ENCODE measurements at regions of chr2 and their contacts with region 1.

Region 1: GRCh38 chr2:151828143-151828889 is at the start of gene ARL5A:
- DNase-seq: peak; percentile 93 to 95
- ATAC-seq: peak; percentile 88
- H3K4me3 ChIP-seq: peak within 1 kb of the TSS; percentile 87 to 94 (median 90)
- H3K27ac ChIP-seq: peak within 1 kb of the TSS; percentile 90 to 96 (median 95)
- H3K4me1 ChIP-seq: peaks cover 46 to 49% of the 10 kb centered on the region in 2 donors
- H3K27me3 ChIP-seq: no peaks in the 10 kb centered on the region
- CTCF ChIP-seq: peak in 1 of 5 experiments; percentile 5
- POLR2A ChIP-seq: peak; percentile 92 to 96
- total RNA-seq, gene ARL5A: 45.0 to 81.7 (median 60.6) TPM

Region 2: DNA sequence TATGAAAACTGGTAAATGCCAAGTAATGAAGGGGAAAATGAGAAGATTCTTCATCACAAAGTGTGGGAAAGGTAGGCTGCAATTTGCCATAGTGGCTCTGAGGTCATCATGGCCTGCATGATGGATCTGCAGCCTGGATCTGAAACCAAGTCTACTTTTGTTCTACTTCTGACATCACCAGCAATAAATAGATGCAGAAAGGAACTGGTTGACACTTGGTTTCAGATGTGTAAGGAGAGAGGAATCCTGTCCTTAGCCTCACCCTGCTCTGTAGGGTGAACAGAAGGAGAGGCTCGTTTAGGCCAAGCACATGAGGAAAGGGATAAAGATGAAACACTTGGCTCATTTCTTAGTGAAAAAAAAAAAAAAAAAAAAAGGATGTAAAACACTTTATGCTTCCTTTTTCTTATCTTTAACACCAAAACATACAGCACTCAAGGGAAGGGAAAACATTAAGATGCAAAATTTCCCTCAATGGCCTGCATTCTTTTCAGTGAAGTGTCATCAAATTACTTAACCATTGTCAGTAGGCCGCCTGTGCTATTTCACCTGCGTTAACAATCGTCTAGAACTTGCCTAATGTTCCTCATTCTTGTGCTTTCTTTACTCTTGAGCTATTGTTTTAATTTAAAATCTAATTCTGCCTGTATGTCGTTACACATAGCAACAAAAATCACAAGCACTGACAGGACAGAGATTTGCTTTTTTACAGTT is 97.9 kb before region 1 on chr2:
- in situ Hi-C with region 1: no loop called
- intact Hi-C with region 1: loop called (anchors 5 kb)
- DNase-seq: peak; percentile 51 to 62
- ATAC-seq: peak; percentile 76 to 77
- H3K4me3 ChIP-seq: peak overlapping the region; percentile 3 to 63 (median 40)
- H3K27ac ChIP-seq: peak overlapping the region; percentile 81 to 93 (median 90)
- H3K4me1 ChIP-seq: peaks cover 71 to 75% of the 10 kb centered on the region in 2 donors
- H3K27me3 ChIP-seq: no peaks in the 10 kb centered on the region
- CTCF ChIP-seq: no peak
- POLR2A ChIP-seq: peak; percentile 14 to 73

Region 3: DNA sequence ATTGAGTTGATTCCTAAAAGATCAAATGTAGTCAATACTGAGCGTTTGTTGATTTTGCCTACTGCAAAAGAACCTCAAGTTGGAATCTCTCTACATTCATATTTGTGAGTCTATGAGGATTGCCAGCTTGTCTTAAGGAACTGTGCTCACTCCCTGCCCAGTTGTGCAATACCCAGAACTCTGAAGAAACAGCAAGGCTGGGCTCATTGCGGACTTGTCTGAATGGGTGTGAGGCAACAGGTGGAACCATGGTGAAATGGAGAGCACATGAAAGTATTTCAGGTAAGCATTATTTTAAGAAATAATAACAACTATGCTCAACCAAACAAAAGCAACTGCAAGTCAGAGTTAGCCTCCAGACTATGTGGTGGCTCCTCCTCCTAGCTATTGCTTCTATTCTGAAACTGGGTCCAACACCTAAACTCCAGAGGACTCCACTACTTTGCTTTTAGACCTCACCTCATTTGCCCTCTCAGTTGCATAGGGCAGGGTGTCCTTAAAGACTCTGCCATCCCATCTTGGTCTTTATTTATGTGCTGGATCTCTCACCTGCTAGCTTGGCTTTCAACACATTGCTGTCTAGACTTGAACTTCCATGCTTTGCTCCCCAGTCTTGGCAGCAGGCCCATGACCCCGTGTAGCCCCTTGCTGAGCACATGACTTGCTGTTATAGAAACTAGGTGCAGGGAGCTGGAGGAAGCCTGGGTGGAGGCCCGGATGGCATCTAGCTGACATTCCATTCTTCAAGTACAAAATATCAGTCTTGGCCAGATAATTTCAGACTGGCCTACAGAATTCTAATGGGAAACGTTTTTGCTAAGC is 94.7 kb after region 1 on chr2:
- in situ Hi-C with region 1: no loop called
- intact Hi-C with region 1: loop called (anchors 2 kb)
- DNase-seq: peak; percentile 61 to 86
- ATAC-seq: peak; percentile 92 to 98
- H3K4me3 ChIP-seq: no peak overlapping the region
- H3K27ac ChIP-seq: peak overlapping the region; percentile 58 to 76 (median 70)
- H3K4me1 ChIP-seq: peaks cover 11 to 13% of the 10 kb centered on the region in 2 donors
- H3K27me3 ChIP-seq: no peaks in the 10 kb centered on the region
- CTCF ChIP-seq: no peak
- POLR2A ChIP-seq: no peak

Region 4: DNA sequence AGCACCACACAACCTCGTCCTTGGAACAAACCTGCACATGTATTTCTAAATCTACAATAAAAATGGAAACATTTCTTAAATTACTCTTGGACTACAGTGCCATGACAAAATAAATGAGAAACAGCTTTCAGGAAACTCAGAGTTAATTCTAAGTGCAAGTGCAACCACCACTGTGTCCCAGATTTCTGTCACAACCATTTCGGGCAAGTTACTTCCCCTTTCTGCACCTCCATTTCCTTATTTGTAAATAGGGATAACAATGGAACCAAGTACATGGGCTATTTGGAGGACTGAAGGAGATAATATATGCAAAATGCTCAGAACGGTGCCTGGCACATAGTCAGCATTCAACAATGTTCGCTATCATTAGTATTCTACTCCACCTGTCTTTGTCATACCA is 177.3 kb after region 1 on chr2:
- in situ Hi-C with region 1: loop called in 2 of 4 experiments (anchors 25 kb)
- intact Hi-C with region 1: loop called (anchors 2 kb)
- DNase-seq: no peak
- ATAC-seq: no peak
- H3K4me3 ChIP-seq: no peak overlapping the region
- H3K27ac ChIP-seq: no peak overlapping the region
- H3K4me1 ChIP-seq: peaks cover 12 to 16% of the 10 kb centered on the region in 2 donors
- H3K27me3 ChIP-seq: no peaks in the 10 kb centered on the region
- CTCF ChIP-seq: no peak
- POLR2A ChIP-seq: no peak

Region 5: DNA sequence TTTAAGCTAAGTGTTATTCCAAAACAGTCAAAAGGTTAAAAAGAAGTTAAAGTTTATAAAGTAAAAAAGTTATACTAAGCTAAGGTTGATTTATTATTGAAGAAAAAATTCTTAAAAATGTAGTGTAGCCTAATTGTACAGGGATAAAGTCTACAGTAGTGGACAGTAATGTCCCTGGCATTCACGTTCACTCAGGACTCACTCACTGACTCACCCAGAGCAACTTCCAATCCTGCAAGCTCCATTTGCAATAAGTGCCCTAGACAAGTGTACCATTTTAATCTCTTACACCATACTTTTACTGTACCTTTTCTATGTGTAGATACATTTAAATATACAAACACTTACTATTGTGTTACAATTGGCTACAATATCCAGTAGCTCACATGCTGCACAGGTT is 184.4 kb after region 1 on chr2:
- in situ Hi-C with region 1: loop called in 2 of 4 experiments (anchors 25 kb)
- intact Hi-C with region 1: no loop called
- DNase-seq: no peak
- ATAC-seq: no peak
- H3K4me3 ChIP-seq: no peak overlapping the region
- H3K27ac ChIP-seq: no peak overlapping the region
- H3K4me1 ChIP-seq: no peaks in the 10 kb centered on the region
- H3K27me3 ChIP-seq: no peaks in the 10 kb centered on the region
- CTCF ChIP-seq: no peak
- POLR2A ChIP-seq: no peak

Region 6: GRCh38 chr2:152620208-152620607 is 791.9 kb after region 1 on chr2:
- in situ Hi-C with region 1: no loop called
- intact Hi-C with region 1: loop called (anchors 5 kb)
- DNase-seq: peak; percentile 29 to 35
- ATAC-seq: peak; percentile 81 to 89
- H3K4me3 ChIP-seq: no peak overlapping the region
- H3K27ac ChIP-seq: peak overlapping the region; percentile 73 to 81 (median 76)
- H3K4me1 ChIP-seq: peaks cover 19 to 51% of the 10 kb centered on the region in 2 donors
- H3K27me3 ChIP-seq: no peaks in the 10 kb centered on the region
- CTCF ChIP-seq: no peak
- POLR2A ChIP-seq: no peak

Region 7: GRCh38 chr2:152717228-152718075 is 889.1 kb after region 1 on chr2 and contains the start of gene PRPF40A:
- in situ Hi-C with region 1: loop called in 1 of 4 experiments (anchors 25 kb)
- intact Hi-C with region 1: loop called (anchors 5 kb)
- DNase-seq: peak; percentile 99
- ATAC-seq: peak; percentile 81 to 82
- H3K4me3 ChIP-seq: peak within 1 kb of the TSS; percentile 89 to 99 (median 94)
- H3K27ac ChIP-seq: peak within 1 kb of the TSS; percentile 95 to 99 (median 98)
- H3K4me1 ChIP-seq: peaks cover 40 to 46% of the 10 kb centered on the region in 2 donors
- H3K27me3 ChIP-seq: no peaks in the 10 kb centered on the region
- CTCF ChIP-seq: peak in 1 of 5 experiments; percentile 19
- POLR2A ChIP-seq: peak; percentile 79 to 83
- total RNA-seq, gene PRPF40A: 65.3 to 78.0 (median 69.9) TPM

Measured in gastrocnemius medialis (tissue), 4 donors.